Mammary epithelial cell (primary cell): ENCODE measurements at regions of chr20 and their contacts with region 1.

Region 1: GRCh38 chr20:63664861-63665716 is 7.0 kb downstream of the RTEL1 start:
- DNase-seq: no peak
- H3K4me3 ChIP-seq: no peak overlapping the region
- H3K27ac ChIP-seq: no peak overlapping the region
- H3K4me1 ChIP-seq: no peaks in the 10 kb centered on the region
- H3K27me3 ChIP-seq: no peaks in the 10 kb centered on the region
- CTCF ChIP-seq: no peak

Region 2: DNA sequence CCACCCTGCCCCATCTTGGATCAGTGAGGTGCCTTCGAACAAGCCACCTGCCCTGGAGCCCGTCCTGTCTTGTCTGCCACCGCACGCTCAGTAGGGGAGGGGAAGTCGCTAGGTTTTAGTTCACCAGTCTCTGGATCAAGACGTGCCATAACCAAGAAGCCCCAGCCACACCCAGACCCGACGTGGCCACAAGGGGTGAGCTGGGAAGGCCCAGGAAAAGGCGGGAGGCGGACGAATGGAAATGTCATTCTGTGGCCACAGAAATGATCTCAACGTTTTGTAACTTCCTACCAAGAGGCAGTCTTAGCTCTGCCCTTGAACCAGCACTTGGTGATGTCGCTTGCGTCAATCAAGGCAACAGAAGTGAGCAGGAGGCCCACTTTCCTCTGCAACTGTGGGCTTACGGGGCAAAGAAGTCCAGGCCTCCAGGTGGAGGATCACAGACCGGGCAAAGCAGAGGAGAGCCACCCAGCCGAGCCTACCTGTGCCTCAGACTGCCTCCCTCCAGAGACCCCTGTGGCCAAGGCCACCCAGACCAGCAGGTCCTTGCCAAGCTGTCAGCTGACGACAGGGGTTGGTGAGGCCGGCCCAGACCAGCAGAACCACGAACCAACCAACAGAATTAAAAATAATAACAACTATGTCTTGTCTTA is 52.7 kb before region 1 on chr20:
- CTCF ChIA-PET with region 1: no interaction called
- dilution Hi-C with region 1: loop called (anchors 5 kb)
- in situ Hi-C with region 1: no loop called
- intact Hi-C with region 1: no loop called
- DNase-seq: no peak
- H3K4me3 ChIP-seq: no peak overlapping the region
- H3K27ac ChIP-seq: no peak overlapping the region
- H3K4me1 ChIP-seq: no peaks in the 10 kb centered on the region
- H3K27me3 ChIP-seq: no peaks in the 10 kb centered on the region
- CTCF ChIP-seq: no peak

Region 3: DNA sequence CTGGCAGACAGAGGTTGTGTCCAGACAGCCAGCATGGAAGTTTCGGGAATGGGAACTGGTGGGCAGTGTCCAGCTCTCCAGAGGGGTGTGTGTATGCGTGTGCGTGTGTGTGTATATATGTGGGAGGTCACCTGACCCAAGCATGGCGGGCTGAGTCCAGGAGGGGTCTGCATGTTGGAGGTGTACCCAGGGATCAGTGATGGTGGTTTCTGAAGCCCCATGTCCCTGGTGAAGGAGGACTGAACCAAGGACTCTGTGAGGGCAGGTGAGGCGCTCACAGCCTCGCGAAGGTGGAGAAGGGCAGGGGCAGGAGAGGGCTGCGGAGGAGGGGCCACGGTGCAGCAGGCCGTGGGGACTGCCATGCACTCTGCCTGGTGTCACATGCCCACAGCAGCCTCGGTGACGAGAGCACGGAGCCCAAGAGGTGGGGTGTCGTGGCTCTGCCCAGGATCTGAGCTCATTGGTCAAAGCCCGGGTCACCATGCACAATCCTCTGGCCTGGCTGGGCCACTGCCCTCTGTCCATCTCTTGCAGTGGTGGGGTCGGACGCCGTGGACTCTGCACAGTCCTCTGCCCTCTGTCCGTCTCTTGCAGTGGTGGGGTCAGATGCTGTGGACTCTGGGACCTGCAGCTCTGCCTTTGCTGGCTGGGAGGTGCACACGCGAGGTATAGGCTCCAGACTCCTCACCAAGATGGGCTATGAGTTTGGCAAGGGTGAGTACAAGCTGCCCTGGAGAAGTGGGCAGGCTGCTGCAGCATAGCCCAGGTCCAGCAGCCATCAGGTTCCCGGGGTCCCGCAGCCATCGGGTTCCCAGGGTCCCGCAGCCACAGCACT is 69.2 kb after region 1 on chr20:
- CTCF ChIA-PET with region 1: no interaction called
- dilution Hi-C with region 1: loop called (anchors 5 kb)
- in situ Hi-C with region 1: no loop called
- intact Hi-C with region 1: no loop called
- DNase-seq: no peak
- H3K4me3 ChIP-seq: no peak overlapping the region
- H3K27ac ChIP-seq: no peak overlapping the region
- H3K4me1 ChIP-seq: peaks cover 21% of the 10 kb centered on the region
- H3K27me3 ChIP-seq: no peaks in the 10 kb centered on the region
- CTCF ChIP-seq: no peak